ENCODE measurements at regions of chr12 and their contacts with region 1.

Region 1: DNA sequence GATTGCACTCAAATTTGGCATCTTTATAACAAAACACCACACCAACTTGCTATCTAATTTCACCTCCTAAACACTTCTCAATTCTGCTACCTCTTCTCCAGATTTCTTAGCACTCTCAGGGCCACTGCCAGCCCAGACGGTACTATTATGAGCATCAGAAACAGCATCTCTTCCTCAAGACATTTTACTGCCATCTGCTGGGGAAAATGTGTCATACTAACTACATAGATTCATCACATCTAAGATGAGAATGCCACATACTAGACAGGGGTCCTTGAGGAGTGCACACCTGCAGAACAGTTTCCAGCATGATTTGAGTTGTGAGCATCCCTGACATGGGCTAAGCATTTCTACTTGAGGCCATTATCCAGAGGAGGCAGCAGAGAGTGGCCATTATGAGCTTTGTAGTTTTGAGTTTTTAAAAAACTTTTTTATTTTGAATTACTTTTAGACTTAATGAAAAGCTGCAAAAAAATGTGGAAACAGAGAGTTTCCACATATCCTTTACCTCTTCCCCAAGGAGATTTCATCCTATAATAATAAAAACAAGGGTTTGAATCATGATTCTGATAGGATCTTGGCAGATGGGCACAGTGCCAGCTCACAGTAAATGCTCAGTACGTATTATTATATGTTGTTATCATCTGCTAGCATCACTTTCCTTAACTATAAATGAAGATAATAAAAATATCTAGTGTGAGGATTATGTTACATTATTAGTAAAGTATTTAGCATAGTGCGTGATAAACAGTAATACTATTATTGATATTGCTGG is 15.2 kb upstream of the GRIP1 start:
- DNase-seq: peak; percentile 80
- ATAC-seq: peak; percentile 73
- H3K4me3 ChIP-seq: no peak overlapping the region
- H3K4me3 Mint-ChIP-seq: no peak overlapping the region
- H3K27ac ChIP-seq: no peak overlapping the region
- H3K27ac Mint-ChIP-seq: no peak overlapping the region
- H3K4me1 ChIP-seq: peaks cover 7 to 10% of the 10 kb centered on the region in 2 donors
- H3K4me1 Mint-ChIP-seq: peaks cover 11% of the 10 kb centered on the region
- H3K27me3 ChIP-seq: no peaks in the 10 kb centered on the region
- H3K27me3 Mint-ChIP-seq: peaks cover 5% of the 10 kb centered on the region
- CTCF ChIP-seq: peak; percentile 84

Region 2: DNA sequence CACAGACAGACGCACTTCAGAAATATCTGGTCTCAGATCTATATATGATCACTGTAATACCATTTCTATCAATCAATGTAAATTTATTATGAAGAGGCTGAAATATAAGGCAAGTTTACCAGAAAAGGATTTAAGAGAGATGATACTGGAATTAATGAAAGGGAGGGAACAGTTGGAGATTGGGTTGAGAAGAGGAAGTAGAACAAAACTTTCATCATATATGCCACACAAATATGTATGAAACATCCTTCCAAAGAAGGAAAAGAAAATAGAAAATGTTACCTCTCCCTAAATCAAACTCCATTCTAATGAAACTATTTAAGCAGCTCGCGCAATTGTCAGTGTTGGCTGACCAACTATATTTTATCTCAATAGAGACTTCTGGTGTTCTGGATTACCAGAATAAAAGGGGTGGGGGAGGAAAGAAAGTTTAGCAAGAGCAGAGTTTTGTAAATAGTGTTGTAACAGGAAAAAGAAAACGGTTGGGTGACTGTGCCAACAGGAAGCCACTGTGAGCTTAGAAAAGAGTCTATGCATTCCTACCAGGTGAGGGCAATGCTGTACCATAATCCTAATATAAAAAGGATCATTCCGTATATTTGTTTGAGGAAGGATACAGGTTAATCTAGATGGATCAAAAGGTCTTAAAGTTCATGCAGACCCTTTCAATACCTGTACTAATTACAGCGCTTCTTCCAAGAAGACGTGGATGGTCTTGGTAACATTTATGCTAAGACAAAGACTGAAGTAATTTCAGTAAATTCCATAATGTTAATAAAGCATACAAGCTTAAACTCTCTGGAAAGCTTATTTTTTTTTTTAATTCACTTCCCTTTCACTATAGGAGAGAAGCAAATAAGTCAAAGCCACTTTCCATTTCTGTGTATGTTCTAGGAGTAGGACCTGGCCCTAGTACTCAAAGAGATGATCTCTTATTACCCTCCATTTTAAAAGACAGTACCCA is 549.0 kb before region 1 on chr12:
- CTCF ChIA-PET with region 1: interaction called, 11 read pairs
- POLR2A ChIA-PET with region 1: no interaction called
- intact Hi-C with region 1: loop called (anchors 10 kb)
- DNase-seq: peak; percentile 35
- ATAC-seq: peak; percentile 31
- H3K4me3 ChIP-seq: no peak overlapping the region
- H3K4me3 Mint-ChIP-seq: no peak overlapping the region
- H3K27ac ChIP-seq: peak overlapping the region in 1 of 2 donors; percentile 71
- H3K27ac Mint-ChIP-seq: peak overlapping the region; percentile 81
- H3K4me1 ChIP-seq: peaks cover 5 to 19% of the 10 kb centered on the region in 2 donors
- H3K4me1 Mint-ChIP-seq: peaks cover 17% of the 10 kb centered on the region
- H3K27me3 ChIP-seq: no peaks in the 10 kb centered on the region
- H3K27me3 Mint-ChIP-seq: no peaks in the 10 kb centered on the region
- CTCF ChIP-seq: peak; percentile 63

Region 3: GRCh38 chr12:66301944-66302826 is 391.9 kb before region 1 on chr12 and contains the start of gene HELB:
- CTCF ChIA-PET with region 1: interaction called, 11 read pairs
- POLR2A ChIA-PET with region 1: no interaction called
- intact Hi-C with region 1: no loop called
- DNase-seq: peak; percentile 92
- ATAC-seq: peak; percentile 95
- H3K4me3 ChIP-seq: peak within 1 kb of the TSS; percentile 69 to 99 (median 92)
- H3K4me3 Mint-ChIP-seq: peak within 1 kb of the TSS; percentile 99
- H3K27ac ChIP-seq: peak within 1 kb of the TSS; percentile 68
- H3K27ac Mint-ChIP-seq: peak within 1 kb of the TSS; percentile 94
- H3K4me1 ChIP-seq: peaks cover 10 to 15% of the 10 kb centered on the region in 2 donors
- H3K4me1 Mint-ChIP-seq: peaks cover 36% of the 10 kb centered on the region
- H3K27me3 ChIP-seq: no peaks in the 10 kb centered on the region
- H3K27me3 Mint-ChIP-seq: peaks cover 4% of the 10 kb centered on the region
- CTCF ChIP-seq: no peak
- total RNA-seq, gene HELB: 10.0 and 11.8 TPM in 2 replicates

Region 4: DNA sequence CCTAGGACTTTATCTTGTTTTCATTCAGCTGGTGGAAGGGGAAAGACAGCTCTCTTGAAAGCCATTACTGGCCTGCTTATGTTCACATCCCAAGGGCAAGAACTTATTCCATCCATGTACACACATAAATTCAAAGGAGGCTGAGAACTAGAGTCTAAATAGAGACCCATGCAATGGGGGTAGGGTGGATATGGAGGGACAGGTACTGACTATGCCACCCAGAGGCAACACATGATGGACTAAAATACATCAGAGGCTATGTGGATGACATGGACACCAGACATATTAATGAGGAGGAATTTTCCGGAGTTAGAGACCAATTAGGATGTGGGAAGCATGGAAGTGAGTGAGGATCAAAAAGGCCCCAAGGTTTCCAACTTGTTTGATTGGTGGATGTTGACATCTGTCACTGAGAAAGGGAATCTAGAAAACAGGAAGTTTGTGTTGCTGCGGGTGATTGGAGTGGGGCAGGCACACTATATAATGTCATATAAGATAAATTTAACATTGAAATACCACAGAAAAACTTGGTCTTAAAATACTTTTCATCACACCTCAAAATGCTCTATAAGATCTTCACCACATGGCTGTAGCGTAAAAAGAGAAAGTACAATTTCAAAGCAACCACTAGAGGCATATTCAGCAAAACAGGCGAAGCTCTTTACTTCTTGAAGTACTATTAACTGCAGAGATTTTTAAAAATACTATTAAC is 145.6 kb before region 1 on chr12:
- CTCF ChIA-PET with region 1: no interaction called
- POLR2A ChIA-PET with region 1: no interaction called
- intact Hi-C with region 1: loop called (anchors 2 kb)
- DNase-seq: peak; percentile 18
- ATAC-seq: peak; percentile 31
- H3K4me3 ChIP-seq: no peak overlapping the region
- H3K4me3 Mint-ChIP-seq: peak overlapping the region; percentile 17
- H3K27ac ChIP-seq: peak overlapping the region; percentile 46 to 69
- H3K27ac Mint-ChIP-seq: peak overlapping the region; percentile 21
- H3K4me1 ChIP-seq: peaks cover 16 to 18% of the 10 kb centered on the region in 2 donors
- H3K4me1 Mint-ChIP-seq: peaks cover 24% of the 10 kb centered on the region
- H3K27me3 ChIP-seq: no peaks in the 10 kb centered on the region
- H3K27me3 Mint-ChIP-seq: no peaks in the 10 kb centered on the region
- CTCF ChIP-seq: peak; percentile 40

Region 5: DNA sequence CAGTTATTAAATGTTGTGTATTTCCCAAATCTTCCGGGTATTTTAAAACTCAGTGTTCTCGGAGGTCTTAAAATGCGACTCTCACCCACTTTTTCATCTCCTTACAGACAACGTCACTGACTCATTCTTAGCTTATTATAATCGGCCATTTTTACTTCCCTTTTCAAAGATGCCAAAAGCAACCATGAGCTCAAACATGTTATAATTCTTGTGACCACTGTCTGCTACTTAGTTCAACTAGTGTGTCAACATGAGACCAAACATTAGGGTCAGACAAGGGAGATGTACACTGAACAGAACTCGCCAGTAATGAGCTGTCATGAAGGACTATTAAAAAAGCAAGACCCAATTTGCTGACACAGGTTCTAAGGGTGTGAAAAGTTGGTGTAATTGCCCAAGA is 11.0 kb before region 1 on chr12:
- CTCF ChIA-PET with region 1: interaction called, 52 read pairs
- POLR2A ChIA-PET with region 1: no interaction called
- intact Hi-C with region 1: no loop called
- DNase-seq: no peak
- ATAC-seq: no peak
- H3K4me3 ChIP-seq: no peak overlapping the region
- H3K4me3 Mint-ChIP-seq: peak overlapping the region; percentile 27
- H3K27ac ChIP-seq: no peak overlapping the region
- H3K27ac Mint-ChIP-seq: no peak overlapping the region
- H3K4me1 ChIP-seq: no peaks in the 10 kb centered on the region
- H3K4me1 Mint-ChIP-seq: peaks cover 46% of the 10 kb centered on the region
- H3K27me3 ChIP-seq: no peaks in the 10 kb centered on the region
- H3K27me3 Mint-ChIP-seq: no peaks in the 10 kb centered on the region
- CTCF ChIP-seq: no peak

Region 6: GRCh38 chr12:66860752-66861750 is 167.0 kb after region 1 on chr12:
- CTCF ChIA-PET with region 1: interaction called, 14 read pairs
- POLR2A ChIA-PET with region 1: no interaction called
- intact Hi-C with region 1: loop called (anchors 1 kb)
- DNase-seq: peak; percentile 66
- ATAC-seq: peak; percentile 39
- H3K4me3 ChIP-seq: no peak overlapping the region
- H3K4me3 Mint-ChIP-seq: no peak overlapping the region
- H3K27ac ChIP-seq: no peak overlapping the region
- H3K27ac Mint-ChIP-seq: no peak overlapping the region
- H3K4me1 ChIP-seq: no peaks in the 10 kb centered on the region
- H3K4me1 Mint-ChIP-seq: no peaks in the 10 kb centered on the region
- H3K27me3 ChIP-seq: peaks cover 0 to 4% (median 2%) of the 10 kb centered on the region in 4 experiments
- H3K27me3 Mint-ChIP-seq: peaks cover 17% of the 10 kb centered on the region
- CTCF ChIP-seq: peak; percentile 98